A673 (cell line): ENCODE measurements at regions of chr6 and their contacts with region 1.

Region 1: GRCh38 chr6:56690519-56691285 is 48.0 kb upstream of the DST start:
- DNase-seq: peak; percentile 74
- H3K4me3 ChIP-seq: peak overlapping the region; percentile 2
- H3K27ac ChIP-seq: peak overlapping the region; percentile 79
- H3K4me1 ChIP-seq: peaks cover 37% of the 10 kb centered on the region
- H3K27me3 ChIP-seq: no peaks in the 10 kb centered on the region
- CTCF ChIP-seq: no peak

Region 2: DNA sequence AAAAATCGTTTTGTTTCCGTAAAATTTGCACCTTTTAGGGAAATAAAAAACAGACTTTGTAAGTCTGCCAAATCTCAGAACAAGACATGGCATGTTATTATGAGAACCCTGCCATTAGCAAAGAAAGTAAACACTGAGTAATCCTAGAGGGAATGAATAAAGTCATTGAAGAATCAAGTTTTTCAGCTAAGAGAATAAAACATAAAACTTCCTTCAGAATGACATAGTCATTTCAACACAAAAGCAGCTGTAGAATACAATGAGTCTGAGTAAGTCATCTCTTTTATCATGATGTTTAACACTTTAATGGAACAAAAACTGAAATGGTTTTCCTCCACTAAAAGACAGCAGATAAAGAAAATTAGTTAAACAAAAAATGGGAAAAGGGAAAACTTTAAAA is 37.7 kb before region 1 on chr6:
- CTCF ChIA-PET with region 1: no interaction called
- POLR2A ChIA-PET with region 1: no interaction called
- intact Hi-C with region 1: loop called (anchors 1 kb)
- DNase-seq: peak; percentile 33
- H3K4me3 ChIP-seq: no peak overlapping the region
- H3K27ac ChIP-seq: no peak overlapping the region
- H3K4me1 ChIP-seq: peaks cover 50% of the 10 kb centered on the region
- H3K27me3 ChIP-seq: no peaks in the 10 kb centered on the region
- CTCF ChIP-seq: no peak

Region 3: GRCh38 chr6:56984361-56984760 is 293.7 kb after region 1 on chr6:
- CTCF ChIA-PET with region 1: no interaction called
- POLR2A ChIA-PET with region 1: no interaction called
- intact Hi-C with region 1: no loop called
- DNase-seq: no peak
- H3K4me3 ChIP-seq: no peak overlapping the region
- H3K27ac ChIP-seq: no peak overlapping the region
- H3K4me1 ChIP-seq: no peaks in the 10 kb centered on the region
- H3K27me3 ChIP-seq: no peaks in the 10 kb centered on the region
- CTCF ChIP-seq: no peak